ENCODE measurements at regions of chr1 and their contacts with region 1.

Region 1: DNA sequence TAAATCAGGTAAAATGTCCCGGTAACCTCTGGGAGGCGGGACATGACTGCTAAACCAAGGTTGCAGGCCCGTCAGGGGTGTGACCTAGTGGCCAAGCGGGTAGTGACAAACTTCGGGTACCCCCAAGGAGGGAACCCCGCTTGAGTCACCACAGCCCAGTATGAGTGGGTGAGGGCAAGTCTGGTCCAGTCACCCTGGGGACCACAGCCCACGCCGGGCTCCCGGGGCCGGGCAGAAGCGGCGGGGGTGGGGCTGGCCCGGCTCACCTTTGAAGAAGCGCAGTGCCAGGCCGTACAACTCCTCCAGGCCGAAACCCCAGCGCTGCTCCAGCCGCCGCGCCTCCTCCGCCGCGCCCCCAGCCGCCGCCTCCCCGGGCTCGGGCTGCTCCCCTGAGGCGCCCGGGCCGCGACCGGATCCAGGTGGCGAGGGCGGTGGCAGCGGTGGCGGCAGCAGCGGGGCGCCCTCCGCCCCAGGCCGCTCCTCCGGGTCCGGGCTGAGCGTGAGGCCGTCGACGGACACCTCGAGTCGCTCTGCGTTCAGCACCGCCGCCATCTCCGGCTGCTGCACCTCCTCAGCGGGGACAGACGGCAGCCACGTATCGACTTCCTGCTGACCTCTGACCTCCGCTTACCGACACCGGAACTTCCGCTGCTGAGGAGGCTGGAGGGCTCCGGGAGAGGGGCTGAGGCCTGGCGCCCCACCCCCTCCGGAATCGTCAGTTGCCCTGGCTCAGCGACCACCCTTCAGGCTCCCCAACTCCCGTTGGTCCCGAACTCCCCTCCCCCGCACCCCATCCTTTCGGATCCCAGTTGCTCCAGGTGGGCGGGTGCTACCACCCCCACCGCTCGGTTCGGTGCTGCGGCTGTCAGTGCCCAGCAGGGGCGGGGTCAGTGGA is at the start of gene ACBD3:
- DNase-seq: peak; percentile 92
- ATAC-seq: peak; percentile 89
- H3K4me3 ChIP-seq: peak within 1 kb of the TSS; percentile 58 to 94 (median 70)
- H3K4me3 Mint-ChIP-seq: peak within 1 kb of the TSS; percentile 96
- H3K27ac ChIP-seq: peak within 1 kb of the TSS; percentile 86 to 96
- H3K27ac Mint-ChIP-seq: peak within 1 kb of the TSS; percentile 95
- H3K4me1 ChIP-seq: peaks cover 42 to 52% of the 10 kb centered on the region in 2 donors
- H3K4me1 Mint-ChIP-seq: peaks cover 41% of the 10 kb centered on the region
- H3K27me3 ChIP-seq: no peaks in the 10 kb centered on the region
- H3K27me3 Mint-ChIP-seq: no peaks in the 10 kb centered on the region
- CTCF ChIP-seq: no peak
- total RNA-seq, gene ACBD3: 60.6 and 73.9 TPM in 2 replicates

Region 2: GRCh38 chr1:226092965-226093364 is 93.4 kb before region 1 on chr1:
- CTCF ChIA-PET with region 1: no interaction called
- POLR2A ChIA-PET with region 1: no interaction called
- intact Hi-C with region 1: no loop called
- DNase-seq: no peak
- ATAC-seq: no peak
- H3K4me3 ChIP-seq: no peak overlapping the region
- H3K4me3 Mint-ChIP-seq: no peak overlapping the region
- H3K27ac ChIP-seq: no peak overlapping the region
- H3K27ac Mint-ChIP-seq: no peak overlapping the region
- H3K4me1 ChIP-seq: no peaks in the 10 kb centered on the region
- H3K4me1 Mint-ChIP-seq: no peaks in the 10 kb centered on the region
- H3K27me3 ChIP-seq: peaks cover 0 to 3% (median 0%) of the 10 kb centered on the region in 4 experiments
- H3K27me3 Mint-ChIP-seq: no peaks in the 10 kb centered on the region
- CTCF ChIP-seq: no peak

Region 3: DNA sequence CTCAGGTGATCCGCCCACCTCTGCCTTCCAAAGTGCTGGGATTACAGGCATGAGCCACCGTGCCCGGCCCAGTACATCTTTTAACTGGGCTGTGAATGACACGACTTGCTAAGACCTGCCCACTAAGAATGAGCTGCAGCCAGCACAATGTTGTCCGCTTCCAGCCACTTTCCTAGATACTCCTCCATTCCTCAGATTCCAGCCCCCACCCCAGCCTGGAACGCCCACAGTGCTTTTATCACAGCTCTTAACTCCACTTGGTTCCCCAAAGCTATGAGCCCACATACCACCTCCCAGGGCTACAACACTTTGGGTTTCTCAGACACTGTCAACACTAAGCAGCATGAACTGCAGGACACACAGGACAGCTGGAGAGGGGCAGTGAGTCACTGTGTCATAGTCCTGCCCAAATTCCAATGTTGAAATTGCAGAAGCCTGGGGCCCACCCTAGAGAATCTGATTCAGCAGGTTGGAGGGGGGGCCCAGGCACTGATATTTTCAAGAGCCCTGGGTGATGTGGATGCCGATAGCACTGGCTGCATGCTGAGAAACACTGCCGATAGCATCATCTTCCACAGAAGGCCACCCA is 57.8 kb before region 1 on chr1:
- CTCF ChIA-PET with region 1: interaction called, 402 read pairs
- POLR2A ChIA-PET with region 1: interaction called, 13 read pairs
- intact Hi-C with region 1: loop called (anchors 1 kb)
- DNase-seq: no peak
- ATAC-seq: no peak
- H3K4me3 ChIP-seq: no peak overlapping the region
- H3K4me3 Mint-ChIP-seq: peak overlapping the region; percentile 90
- H3K27ac ChIP-seq: peak overlapping the region; percentile 94 to 97
- H3K27ac Mint-ChIP-seq: peak overlapping the region; percentile 100
- H3K4me1 ChIP-seq: peaks cover 96 to 100% of the 10 kb centered on the region in 2 donors
- H3K4me1 Mint-ChIP-seq: peaks cover 92% of the 10 kb centered on the region
- H3K27me3 ChIP-seq: no peaks in the 10 kb centered on the region
- H3K27me3 Mint-ChIP-seq: no peaks in the 10 kb centered on the region
- CTCF ChIP-seq: no peak

Region 4: GRCh38 chr1:226157761-226158316 is 28.5 kb before region 1 on chr1:
- CTCF ChIA-PET with region 1: interaction called, 11 read pairs
- POLR2A ChIA-PET with region 1: interaction called, 6 read pairs
- intact Hi-C with region 1: no loop called
- DNase-seq: peak; percentile 47
- ATAC-seq: peak; percentile 61
- H3K4me3 ChIP-seq: peak overlapping the region in 1 of 5 experiments; percentile 16
- H3K4me3 Mint-ChIP-seq: peak overlapping the region; percentile 67
- H3K27ac ChIP-seq: peak overlapping the region; percentile 61 to 69
- H3K27ac Mint-ChIP-seq: peak overlapping the region; percentile 93
- H3K4me1 ChIP-seq: peaks cover 56 to 68% of the 10 kb centered on the region in 2 donors
- H3K4me1 Mint-ChIP-seq: peaks cover 69% of the 10 kb centered on the region
- H3K27me3 ChIP-seq: no peaks in the 10 kb centered on the region
- H3K27me3 Mint-ChIP-seq: no peaks in the 10 kb centered on the region
- CTCF ChIP-seq: no peak

Region 5: GRCh38 chr1:226201029-226201593 is 14.7 kb after region 1 on chr1:
- CTCF ChIA-PET with region 1: interaction called, 30 read pairs
- POLR2A ChIA-PET with region 1: interaction called, 10 read pairs
- intact Hi-C with region 1: no loop called
- DNase-seq: no peak
- ATAC-seq: no peak
- H3K4me3 ChIP-seq: no peak overlapping the region
- H3K4me3 Mint-ChIP-seq: no peak overlapping the region
- H3K27ac ChIP-seq: no peak overlapping the region
- H3K27ac Mint-ChIP-seq: peak overlapping the region; percentile 32
- H3K4me1 ChIP-seq: peaks cover 13 to 17% of the 10 kb centered on the region in 2 donors
- H3K4me1 Mint-ChIP-seq: peaks cover 23% of the 10 kb centered on the region
- H3K27me3 ChIP-seq: no peaks in the 10 kb centered on the region
- H3K27me3 Mint-ChIP-seq: peaks cover 3% of the 10 kb centered on the region
- CTCF ChIP-seq: peak; percentile 22

Region 6: GRCh38 chr1:226223786-226224244 is 37.4 kb after region 1 on chr1:
- CTCF ChIA-PET with region 1: no interaction called
- POLR2A ChIA-PET with region 1: no interaction called
- intact Hi-C with region 1: no loop called
- DNase-seq: peak; percentile 71
- ATAC-seq: peak; percentile 76
- H3K4me3 ChIP-seq: peak overlapping the region in 4 of 5 experiments; percentile 49 to 65 (median 57)
- H3K4me3 Mint-ChIP-seq: peak overlapping the region; percentile 92
- H3K27ac ChIP-seq: no peak overlapping the region
- H3K27ac Mint-ChIP-seq: peak overlapping the region; percentile 53
- H3K4me1 ChIP-seq: peaks cover 5 to 16% of the 10 kb centered on the region in 2 donors
- H3K4me1 Mint-ChIP-seq: peaks cover 8% of the 10 kb centered on the region
- H3K27me3 ChIP-seq: peaks cover 0 to 28% (median 9%) of the 10 kb centered on the region in 4 experiments
- H3K27me3 Mint-ChIP-seq: peaks cover 8% of the 10 kb centered on the region
- CTCF ChIP-seq: no peak